Common myeloid progenitor, CD34-positive (primary cell): ENCODE measurements at regions of chr12 and their contacts with region 1.

Region 1: DNA sequence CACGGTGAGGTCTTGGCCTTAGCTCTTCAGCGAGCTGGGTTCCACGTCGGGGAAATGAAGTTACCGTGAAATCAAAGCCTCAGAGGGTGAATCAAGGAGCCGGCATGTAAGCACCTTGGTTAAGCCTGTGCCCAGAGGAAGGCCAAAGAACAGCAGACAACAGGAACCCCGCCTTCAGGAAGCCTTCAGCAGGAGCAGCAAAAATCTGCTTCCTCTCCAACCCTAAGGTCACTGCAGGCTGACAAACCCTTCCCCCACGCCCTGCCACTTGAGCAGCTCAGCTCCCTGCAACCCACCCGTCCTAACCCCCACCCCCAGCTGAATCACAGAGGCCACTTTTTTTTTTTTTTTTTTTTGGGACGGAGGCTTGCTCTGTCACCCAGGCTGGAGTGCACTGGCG is 72.9 kb upstream of the LTA4H start:
- DNase-seq: peak; percentile 58 to 90 (median 85)
- H3K4me3 ChIP-seq: peak overlapping the region in 4 of 7 experiments; percentile 3 to 40 (median 24)
- H3K27ac ChIP-seq: no peak overlapping the region
- H3K4me1 ChIP-seq: peaks cover 12 to 69% (median 37%) of the 10 kb centered on the region in 4 experiments
- H3K27me3 ChIP-seq: no peaks in the 10 kb centered on the region

Region 2: DNA sequence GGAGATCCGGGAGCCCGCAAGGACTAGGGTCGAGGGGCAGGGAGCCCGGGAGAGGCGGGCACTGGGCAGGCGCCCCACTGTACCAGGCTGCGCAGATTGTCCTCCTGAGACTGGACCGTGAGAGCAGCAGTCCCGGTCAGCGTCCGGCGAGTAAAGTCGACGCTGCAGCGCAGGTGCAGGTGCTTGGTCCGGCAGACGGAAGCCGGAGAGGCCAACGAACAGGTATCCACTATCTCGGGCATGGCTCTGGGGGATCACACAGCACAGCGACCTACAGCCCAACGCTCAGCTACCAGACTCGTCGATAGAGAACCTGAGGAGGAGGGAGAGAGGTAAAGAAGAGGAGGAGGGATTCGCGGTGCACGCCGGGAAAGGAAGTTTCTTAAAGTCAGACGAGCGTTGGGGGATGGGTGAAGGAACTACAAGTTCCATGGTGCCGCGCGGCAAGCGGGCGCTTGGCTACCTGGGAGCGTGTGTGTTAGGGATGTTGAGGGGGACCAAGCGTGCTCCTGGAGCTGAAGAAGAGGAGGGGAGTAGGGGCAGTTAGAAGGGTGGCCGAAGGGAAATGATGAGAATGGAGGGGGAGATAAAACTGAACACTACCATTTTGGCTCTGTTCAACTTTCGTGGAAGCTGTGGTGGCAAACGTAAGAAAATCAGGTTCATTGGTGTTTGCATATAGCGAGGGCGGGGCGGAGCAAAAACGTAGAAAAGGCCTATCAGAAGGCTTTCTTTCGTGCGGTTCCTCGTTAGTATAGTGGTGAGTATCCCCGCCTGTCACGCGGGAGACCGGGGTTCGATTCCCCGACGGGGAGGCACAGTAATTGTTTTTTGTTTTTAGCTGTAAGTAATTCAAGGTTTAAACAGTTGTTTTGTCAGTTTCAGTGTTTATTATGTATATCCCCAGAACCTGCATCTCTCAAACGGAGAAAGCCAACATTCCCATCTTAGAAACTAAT is 72.8 kb before region 1 on chr12 and contains the start of gene LTA4H:
- CTCF ChIA-PET with region 1: no interaction called
- POLR2A ChIA-PET with region 1: no interaction called
- DNase-seq: peak; percentile 99 to 100 (median 99)
- H3K4me3 ChIP-seq: peak within 1 kb of the TSS; percentile 88 to 100 (median 98)
- H3K27ac ChIP-seq: peak within 1 kb of the TSS; percentile 72 to 87
- H3K4me1 ChIP-seq: peaks cover 5 to 25% (median 17%) of the 10 kb centered on the region in 4 experiments
- H3K27me3 ChIP-seq: no peaks in the 10 kb centered on the region

Region 3: GRCh38 chr12:96120359-96121100 is 12.2 kb after region 1 on chr12:
- CTCF ChIA-PET with region 1: interaction called, 12 read pairs
- POLR2A ChIA-PET with region 1: interaction called, 3 read pairs
- DNase-seq: peak; percentile 86 to 97 (median 97)
- H3K4me3 ChIP-seq: peak overlapping the region in 2 of 7 experiments; percentile 4 to 61
- H3K27ac ChIP-seq: peak overlapping the region; percentile 27 to 59
- H3K4me1 ChIP-seq: peaks cover 8 to 35% (median 24%) of the 10 kb centered on the region in 4 experiments
- H3K27me3 ChIP-seq: no peaks in the 10 kb centered on the region